ENCODE measurements at regions of chr6 and their contacts with region 1.

Region 1: DNA sequence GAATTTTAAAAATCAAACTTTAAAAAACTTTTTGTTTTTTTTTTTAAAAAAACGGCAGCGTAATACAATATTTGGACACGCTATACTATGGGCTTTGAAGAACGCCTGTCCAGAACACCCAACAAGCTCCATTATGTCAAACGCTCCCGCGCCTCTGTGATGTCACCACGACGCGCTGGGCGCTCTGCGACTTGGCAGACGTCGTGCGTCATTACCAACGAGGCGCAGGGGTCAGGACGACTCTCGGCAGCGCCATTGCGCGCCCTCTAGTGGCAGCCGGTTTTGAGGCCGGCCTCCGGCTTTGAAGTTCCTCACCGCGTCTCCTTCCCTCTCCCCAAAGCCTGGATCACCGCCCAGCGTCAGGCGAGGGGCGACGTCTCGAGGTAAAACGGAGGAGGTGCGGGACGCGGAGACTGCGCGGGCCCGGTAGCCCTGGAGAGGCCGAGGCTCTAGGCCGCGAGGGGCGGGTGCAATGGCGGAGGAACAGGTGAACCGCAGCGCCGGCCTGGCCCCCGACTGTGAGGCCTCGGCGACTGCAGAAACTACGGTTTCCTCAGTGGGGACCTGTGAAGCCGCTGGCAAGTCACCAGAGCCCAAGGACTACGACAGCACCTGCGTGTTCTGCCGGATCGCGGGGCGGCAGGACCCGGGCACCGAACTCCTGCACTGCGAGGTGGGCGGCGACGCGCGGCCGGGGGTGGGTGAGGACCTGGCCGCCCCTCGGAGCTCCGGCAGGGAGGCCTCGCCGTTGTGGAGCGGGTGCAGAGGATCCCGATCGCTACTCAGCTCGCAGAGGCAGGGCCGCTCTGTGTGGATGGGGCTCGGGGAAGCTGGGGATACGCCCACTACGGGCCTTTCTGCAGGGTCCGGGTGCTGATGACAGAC is at the start of gene HINT3:
- DNase-seq: peak; percentile 92 to 99
- H3K4me3 ChIP-seq: peak within 1 kb of the TSS; percentile 47 to 94 (median 90)
- H3K27ac ChIP-seq: peak within 1 kb of the TSS; percentile 12; the same call in 1 of the 2 replicates
- H3K4me1 ChIP-seq: peaks cover 0 to 9% (median 5%) of the 10 kb centered on the region in 4 experiments; a peak in 4 of 7 replicates
- H3K27me3 ChIP-seq: no peaks in the 10 kb centered on the region
- CTCF ChIP-seq: peak; percentile 86 to 99 (median 95)
- EP300 ChIP-seq: peak in 1 of 2 experiments; percentile 79; a peak in 1 of 3 replicates
- POLR2A ChIP-seq: no peak; a peak in 1 of 3 replicates
- RAD21 ChIP-seq: peak; percentile 74 to 75
- total RNA-seq, gene HINT3: 7.7 and 7.8 TPM in 2 replicates

Region 2: GRCh38 chr6:125314019-125314581 is 642.6 kb before region 1 on chr6:
- CTCF ChIA-PET with region 1: interaction called, 24 read pairs
- POLR2A ChIA-PET with region 1: no interaction called
- DNase-seq: peak in 1 of 2 experiments; percentile 59
- H3K4me3 ChIP-seq: no peak overlapping the region
- H3K27ac ChIP-seq: no peak overlapping the region
- H3K4me1 ChIP-seq: peaks cover 0 to 2% (median 0%) of the 10 kb centered on the region in 4 experiments; a peak in 1 of 7 replicates
- H3K27me3 ChIP-seq: no peaks in the 10 kb centered on the region
- CTCF ChIP-seq: peak; percentile 72 to 92 (median 81)
- EP300 ChIP-seq: no peak
- POLR2A ChIP-seq: no peak
- RAD21 ChIP-seq: peak; percentile 97 to 98

Region 3: GRCh38 chr6:125790358-125791150 is 166.2 kb before region 1 on chr6 and contains the start of gene NCOA7:
- CTCF ChIA-PET with region 1: interaction called, 77 read pairs
- POLR2A ChIA-PET with region 1: interaction called, 3 read pairs
- DNase-seq: peak in 1 of 2 experiments; percentile 84
- H3K4me3 ChIP-seq: peak within 1 kb of the TSS; percentile 66 to 84 (median 74)
- H3K27ac ChIP-seq: peak within 1 kb of the TSS; percentile 49; the same call in 1 of the 2 replicates
- H3K4me1 ChIP-seq: peaks cover 2 to 10% (median 4%) of the 10 kb centered on the region in 4 experiments; a peak in 4 of 7 replicates
- H3K27me3 ChIP-seq: no peaks in the 10 kb centered on the region; a peak in 1 of 7 replicates
- CTCF ChIP-seq: no peak
- EP300 ChIP-seq: 0 out of 3 replicates have a peak, but pooled peaks of 1 of the 2 experiments have one; percentile 11
- POLR2A ChIP-seq: peak; percentile 53 to 77
- RAD21 ChIP-seq: no peak
- total RNA-seq, gene NCOA7: 10.3 and 10.7 TPM in 2 replicates

Region 4: DNA sequence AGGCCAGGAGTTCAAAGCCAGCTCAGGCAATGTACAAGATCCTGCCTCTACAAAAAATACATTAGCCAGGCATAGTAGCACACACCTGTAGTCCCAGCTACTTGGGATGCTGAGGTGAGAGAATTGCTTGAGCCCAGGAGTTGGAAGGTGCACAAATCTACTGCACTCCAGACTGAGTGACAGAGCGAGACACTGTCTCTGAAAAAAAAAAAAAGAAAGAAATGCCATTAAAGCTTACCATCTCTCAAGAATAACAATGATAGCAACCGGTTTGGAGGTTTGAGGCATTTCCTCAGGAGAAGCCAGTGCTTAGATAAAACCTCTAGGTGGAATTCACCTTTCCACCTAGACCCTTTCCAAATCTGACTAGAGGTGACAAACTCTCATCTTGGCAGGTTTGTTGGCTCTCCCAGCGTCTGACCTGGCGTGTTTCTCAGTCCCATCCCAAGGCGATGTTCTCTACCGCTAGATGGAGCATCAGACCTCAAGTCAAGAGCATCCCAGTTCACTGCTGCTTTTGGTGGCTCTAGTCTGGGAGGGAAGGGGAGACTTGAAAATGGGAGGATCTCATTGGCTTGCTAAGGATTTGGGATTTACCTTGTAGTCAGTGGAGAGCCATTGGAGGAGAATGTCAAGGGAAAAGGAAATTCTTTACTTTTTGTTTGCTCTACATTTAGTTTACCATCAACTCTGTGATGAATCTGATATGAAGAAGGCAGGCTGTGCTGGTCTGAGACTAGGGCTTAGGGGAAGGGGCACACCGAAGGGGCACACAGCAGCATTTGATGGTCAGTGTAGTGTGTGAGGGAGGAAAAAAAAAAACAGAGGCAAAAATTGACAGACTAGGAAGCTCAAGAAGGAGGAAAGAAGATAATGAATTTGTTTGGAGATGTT is 98.1 kb before region 1 on chr6:
- CTCF ChIA-PET with region 1: interaction called, 70 read pairs
- POLR2A ChIA-PET with region 1: no interaction called
- DNase-seq: peak; percentile 68 to 69
- H3K4me3 ChIP-seq: no peak overlapping the region
- H3K27ac ChIP-seq: no peak overlapping the region
- H3K4me1 ChIP-seq: no peaks in the 10 kb centered on the region
- H3K27me3 ChIP-seq: no peaks in the 10 kb centered on the region
- CTCF ChIP-seq: peak; percentile 84 to 97 (median 90)
- EP300 ChIP-seq: no peak
- POLR2A ChIP-seq: no peak
- RAD21 ChIP-seq: peak; percentile 87 to 92

Region 5: GRCh38 chr6:125899726-125900182 is 57.0 kb before region 1 on chr6:
- CTCF ChIA-PET with region 1: interaction called, 57 read pairs
- POLR2A ChIA-PET with region 1: no interaction called
- DNase-seq: no peak
- H3K4me3 ChIP-seq: no peak overlapping the region
- H3K27ac ChIP-seq: no peak overlapping the region
- H3K4me1 ChIP-seq: no peaks in the 10 kb centered on the region; a peak in 1 of 7 replicates
- H3K27me3 ChIP-seq: no peaks in the 10 kb centered on the region
- CTCF ChIP-seq: peak in 1 of 3 experiments; percentile 30; a peak in 1 of 4 replicates
- EP300 ChIP-seq: no peak
- POLR2A ChIP-seq: no peak
- RAD21 ChIP-seq: no peak; a peak in 1 of 4 replicates

Region 6: GRCh38 chr6:125918681-125919566 is 37.8 kb before region 1 on chr6:
- CTCF ChIA-PET with region 1: interaction called, 15 read pairs
- POLR2A ChIA-PET with region 1: no interaction called
- DNase-seq: no peak
- H3K4me3 ChIP-seq: no peak overlapping the region
- H3K27ac ChIP-seq: no peak overlapping the region
- H3K4me1 ChIP-seq: peaks cover 0 to 11% (median 7%) of the 10 kb centered on the region in 4 experiments; a peak in 6 of 7 replicates
- H3K27me3 ChIP-seq: no peaks in the 10 kb centered on the region
- CTCF ChIP-seq: no peak
- EP300 ChIP-seq: no peak
- POLR2A ChIP-seq: no peak
- RAD21 ChIP-seq: no peak

Region 7: GRCh38 chr6:125974214-125974866 is 17.6 kb after region 1 on chr6:
- CTCF ChIA-PET with region 1: interaction called, 27 read pairs
- POLR2A ChIA-PET with region 1: interaction called, 3 read pairs
- DNase-seq: no peak
- H3K4me3 ChIP-seq: no peak overlapping the region
- H3K27ac ChIP-seq: no peak overlapping the region
- H3K4me1 ChIP-seq: no peaks in the 10 kb centered on the region
- H3K27me3 ChIP-seq: no peaks in the 10 kb centered on the region
- CTCF ChIP-seq: peak in 1 of 3 experiments; percentile 22; a peak in 1 of 4 replicates
- EP300 ChIP-seq: no peak
- POLR2A ChIP-seq: no peak
- RAD21 ChIP-seq: peak; percentile 26 to 38

Measured in H1 (cell line).